ENCODE measurements at regions of chr5 and their contacts with region 1.

Region 1: GRCh38 chr5:170338933-170339779 is 41.6 kb upstream of the LCP2 start:
- DNase-seq: peak; percentile 80
- ATAC-seq: peak; percentile 82
- H3K4me3 Mint-ChIP-seq: no peak overlapping the region
- H3K27ac Mint-ChIP-seq: peak overlapping the region; percentile 8
- H3K4me1 Mint-ChIP-seq: peaks cover 45% of the 10 kb centered on the region
- H3K27me3 Mint-ChIP-seq: no peaks in the 10 kb centered on the region

Region 2: DNA sequence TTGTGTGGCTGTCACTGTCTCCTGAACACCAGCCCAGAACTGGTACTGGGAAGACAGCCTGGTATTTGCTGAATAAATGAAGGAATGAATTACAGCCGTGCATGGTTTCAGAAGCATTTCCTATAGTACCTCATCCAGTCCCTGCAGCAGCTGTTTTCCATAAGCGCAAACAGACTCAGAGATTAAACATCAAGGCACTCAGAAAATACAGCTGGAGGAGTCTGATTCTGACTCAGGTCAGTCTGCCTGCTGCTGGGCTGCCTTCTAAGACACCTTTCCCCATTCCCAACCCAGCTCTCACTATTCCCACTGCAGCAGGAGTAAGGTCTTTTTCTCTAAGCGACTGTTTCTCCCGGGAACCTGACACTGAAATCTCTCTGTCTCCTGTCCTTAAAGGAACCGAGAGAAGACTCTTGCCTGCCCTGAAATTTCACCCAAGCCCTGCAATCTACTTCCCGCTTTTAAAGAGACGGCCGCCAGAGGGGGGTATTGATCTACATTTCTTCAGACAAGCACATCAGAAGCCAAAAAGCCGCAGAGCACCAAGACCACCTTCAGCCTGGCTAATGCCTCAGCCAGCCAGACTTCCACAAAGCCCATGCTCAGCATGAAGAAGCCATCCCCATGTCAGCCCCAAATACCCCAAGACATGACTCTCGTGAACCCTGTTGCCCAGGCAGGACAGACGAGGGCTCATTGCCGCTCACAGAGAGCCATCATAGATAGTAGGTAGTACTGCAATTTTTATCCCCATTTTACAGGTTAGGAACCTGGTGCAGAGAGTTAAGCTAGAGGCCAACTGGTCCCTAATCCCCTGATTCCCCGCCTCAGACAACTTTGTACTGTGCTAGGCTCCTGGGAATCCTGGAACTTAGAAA is 238.9 kb before region 1 on chr5:
- CTCF ChIA-PET with region 1: interaction called, 5 read pairs
- POLR2A ChIA-PET with region 1: interaction called, 3 read pairs
- intact Hi-C with region 1: loop called (anchors 1 to 5 kb)
- DNase-seq: peak; percentile 85
- ATAC-seq: peak; percentile 61
- H3K4me3 Mint-ChIP-seq: no peak overlapping the region
- H3K27ac Mint-ChIP-seq: no peak overlapping the region
- H3K4me1 Mint-ChIP-seq: no peaks in the 10 kb centered on the region
- H3K27me3 Mint-ChIP-seq: peaks cover 2% of the 10 kb centered on the region

Region 3: GRCh38 chr5:170235876-170236864 is 103.0 kb before region 1 on chr5:
- CTCF ChIA-PET with region 1: interaction called, 12 read pairs
- POLR2A ChIA-PET with region 1: no interaction called
- intact Hi-C with region 1: no loop called
- DNase-seq: no peak
- ATAC-seq: no peak
- H3K4me3 Mint-ChIP-seq: no peak overlapping the region
- H3K27ac Mint-ChIP-seq: no peak overlapping the region
- H3K4me1 Mint-ChIP-seq: peaks cover 14% of the 10 kb centered on the region
- H3K27me3 Mint-ChIP-seq: no peaks in the 10 kb centered on the region

Region 4: DNA sequence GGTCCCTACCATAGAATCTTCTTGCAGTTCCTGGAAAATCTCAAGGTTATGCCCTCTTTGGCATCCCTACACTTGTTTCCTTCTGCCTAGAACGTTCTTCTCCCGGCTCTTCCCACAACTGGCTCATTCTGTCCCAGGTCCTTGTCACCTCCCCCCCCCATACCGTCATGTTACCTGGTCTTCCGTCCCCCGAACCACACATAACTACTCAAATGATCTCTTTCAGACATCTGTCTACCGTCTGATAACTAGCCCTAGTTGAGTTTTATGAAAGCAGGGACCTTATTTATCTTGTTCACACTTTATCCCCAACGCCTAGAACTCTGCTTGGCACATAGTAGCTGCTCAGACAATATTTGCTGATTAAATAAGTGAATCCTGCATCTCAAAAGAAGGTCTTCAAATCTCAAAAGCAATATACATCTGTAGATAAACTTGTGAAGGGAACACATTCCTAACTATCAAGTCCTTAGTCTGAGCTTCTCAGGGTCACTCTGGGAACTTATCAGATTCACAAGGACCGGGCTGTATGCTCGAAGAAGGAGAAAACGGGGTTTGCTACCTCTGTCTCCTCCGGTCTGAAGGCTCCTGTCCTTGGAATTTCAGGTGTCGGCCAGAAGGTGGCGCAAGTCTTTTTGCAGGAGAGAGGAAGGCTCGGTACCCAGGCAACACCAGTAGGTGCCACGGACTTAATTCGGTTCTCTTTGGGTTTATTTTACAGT is 71.6 kb before region 1 on chr5:
- CTCF ChIA-PET with region 1: interaction called, 89 read pairs
- POLR2A ChIA-PET with region 1: interaction called, 4 read pairs
- intact Hi-C with region 1: loop called (anchors 1 kb)
- DNase-seq: peak; percentile 91
- ATAC-seq: peak; percentile 50
- H3K4me3 Mint-ChIP-seq: peak overlapping the region; percentile 34
- H3K27ac Mint-ChIP-seq: peak overlapping the region; percentile 86
- H3K4me1 Mint-ChIP-seq: peaks cover 93% of the 10 kb centered on the region
- H3K27me3 Mint-ChIP-seq: no peaks in the 10 kb centered on the region

Region 5: DNA sequence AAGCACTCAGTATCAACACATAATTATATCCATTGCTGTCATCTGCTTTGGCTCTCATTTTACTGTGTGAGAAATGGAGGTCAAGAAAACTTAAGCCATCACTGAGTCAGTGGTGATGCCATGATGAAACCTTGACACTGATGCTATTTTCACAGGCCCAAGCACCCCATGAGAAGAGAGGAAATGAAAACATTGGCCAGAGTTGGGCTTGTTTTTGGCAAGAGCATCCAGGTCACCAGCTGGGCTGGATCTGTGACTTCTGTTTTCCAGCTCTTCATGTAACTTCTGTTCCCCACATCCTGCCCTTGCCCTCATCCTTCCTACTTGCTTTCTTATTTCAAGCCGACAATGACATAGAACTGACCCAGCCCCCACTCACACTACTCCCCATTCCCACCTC is 51.6 kb before region 1 on chr5:
- CTCF ChIA-PET with region 1: interaction called, 85 read pairs
- POLR2A ChIA-PET with region 1: no interaction called
- intact Hi-C with region 1: no loop called
- DNase-seq: no peak
- ATAC-seq: peak; percentile 32
- H3K4me3 Mint-ChIP-seq: peak overlapping the region; percentile 8
- H3K27ac Mint-ChIP-seq: peak overlapping the region; percentile 92
- H3K4me1 Mint-ChIP-seq: peaks cover 99% of the 10 kb centered on the region
- H3K27me3 Mint-ChIP-seq: no peaks in the 10 kb centered on the region

Region 6: GRCh38 chr5:170420780-170421412 is 81.7 kb after region 1 on chr5:
- CTCF ChIA-PET with region 1: interaction called, 4 read pairs
- POLR2A ChIA-PET with region 1: no interaction called
- intact Hi-C with region 1: loop called in 1 of 2 experiments (anchors 5 kb)
- DNase-seq: peak; percentile 68
- ATAC-seq: peak; percentile 53
- H3K4me3 Mint-ChIP-seq: no peak overlapping the region
- H3K27ac Mint-ChIP-seq: no peak overlapping the region
- H3K4me1 Mint-ChIP-seq: peaks cover 11% of the 10 kb centered on the region
- H3K27me3 Mint-ChIP-seq: no peaks in the 10 kb centered on the region